Sigmoid colon (tissue), 7 donors: ENCODE measurements at regions of chr11 and their contacts with region 1.

Region 1: DNA sequence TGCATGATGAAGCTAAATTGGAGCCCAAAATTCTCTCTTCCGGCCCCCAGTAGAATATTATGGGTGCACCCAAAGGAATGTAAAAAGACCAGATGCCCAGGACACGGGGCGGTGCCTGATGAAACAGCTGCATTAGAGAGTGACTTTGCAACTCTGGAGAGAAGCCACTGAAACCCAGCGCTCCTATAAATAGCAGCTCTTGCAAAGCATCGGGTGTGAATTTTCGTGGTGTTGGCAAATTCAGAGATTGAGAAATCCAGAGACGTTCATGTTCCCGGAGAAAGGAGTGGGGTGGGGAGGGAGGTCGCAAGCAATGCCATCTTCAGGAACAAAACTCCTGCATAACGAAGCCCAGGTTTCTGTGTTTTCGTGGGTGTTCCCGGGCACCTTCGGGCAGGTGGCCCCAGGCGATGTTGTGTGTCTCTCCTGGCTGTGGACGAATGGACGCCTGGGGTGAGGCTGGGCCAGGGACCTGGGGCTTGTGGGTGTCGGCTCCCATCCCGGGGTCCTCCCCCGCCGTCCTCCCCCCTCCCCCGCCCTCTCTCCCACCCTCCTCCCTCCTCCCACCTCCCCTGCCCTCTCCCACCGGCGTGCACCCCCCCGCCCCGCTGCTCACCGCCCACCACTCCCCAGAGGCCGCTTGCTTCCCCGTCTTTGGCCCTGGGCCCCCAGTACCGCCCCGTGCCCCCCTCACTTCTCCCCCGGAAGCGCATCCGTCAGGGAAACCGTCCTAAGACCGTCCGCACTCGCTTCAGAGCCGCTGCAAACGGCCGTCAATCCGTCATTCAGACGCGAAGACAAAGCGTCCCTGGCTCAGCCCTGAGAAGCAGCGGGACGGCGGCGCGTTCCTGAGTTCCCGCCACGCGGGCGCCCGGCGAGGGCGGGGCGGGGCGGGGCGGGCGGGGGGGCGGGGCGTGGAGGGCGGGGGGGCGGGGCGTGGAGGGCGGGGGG is 26.7 kb upstream of the TOLLIP start:
- DNase-seq: peak; percentile 93
- H3K4me3 ChIP-seq: peak overlapping the region; percentile 38 to 58 (median 53)
- H3K27ac ChIP-seq: peak overlapping the region; percentile 72 to 87 (median 76)
- H3K4me1 ChIP-seq: peaks cover 0 to 23% (median 21%) of the 10 kb centered on the region in 4 donors
- H3K27me3 ChIP-seq: no peaks in the 10 kb centered on the region
- CTCF ChIP-seq: no peak
- EP300 ChIP-seq: no peak
- POLR2A ChIP-seq: no peak

Region 2: DNA sequence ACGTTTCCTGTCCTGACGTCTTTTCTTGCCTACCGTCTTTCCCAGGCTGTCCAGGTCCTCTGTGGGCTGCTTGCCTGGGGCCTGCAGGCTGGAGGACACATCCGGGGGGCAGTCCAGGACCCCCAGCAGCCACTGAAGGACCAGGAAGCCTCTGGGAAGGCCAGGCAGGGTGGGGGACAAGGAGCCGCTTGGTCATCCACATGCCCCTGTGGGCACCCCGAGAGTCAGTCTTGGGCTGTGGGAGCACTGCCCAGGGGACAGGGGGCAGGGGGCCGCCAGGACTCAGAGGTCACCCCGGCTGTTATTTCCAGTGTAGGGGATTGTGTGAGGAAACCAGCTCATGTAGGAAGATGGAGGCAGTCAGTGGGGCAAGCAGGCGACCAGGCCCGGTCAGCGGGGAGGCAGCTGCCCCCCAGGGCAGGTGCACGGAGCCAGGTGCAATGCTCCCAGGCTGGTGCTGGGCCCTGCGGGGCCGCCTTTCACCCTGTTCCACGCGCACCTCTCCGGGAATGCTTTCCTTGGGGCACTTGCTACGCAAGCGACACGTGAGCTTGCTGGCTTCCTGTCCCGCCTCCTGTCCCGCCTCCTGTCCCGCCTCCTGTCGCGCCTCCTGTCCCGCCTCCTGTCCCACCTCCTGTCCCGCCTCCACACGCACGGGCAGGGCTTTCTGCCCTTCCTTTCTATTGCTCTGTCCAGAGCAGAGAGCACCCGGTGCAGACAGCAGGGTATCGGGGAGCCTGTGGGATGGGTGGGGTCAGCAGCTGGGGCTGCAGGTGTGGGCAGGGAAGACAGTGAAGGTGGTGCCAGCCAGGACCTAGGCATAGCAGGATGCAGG is 73.7 kb before region 1 on chr11:
- intact Hi-C with region 1: loop called (anchors 5 kb)
- DNase-seq: peak; percentile 97
- H3K4me3 ChIP-seq: peak overlapping the region; percentile 30 to 50 (median 46)
- H3K27ac ChIP-seq: peak overlapping the region; percentile 65 to 74 (median 72)
- H3K4me1 ChIP-seq: peaks cover 0 to 17% (median 15%) of the 10 kb centered on the region in 4 donors
- H3K27me3 ChIP-seq: no peaks in the 10 kb centered on the region
- CTCF ChIP-seq: no peak
- EP300 ChIP-seq: no peak
- POLR2A ChIP-seq: peak in 1 of 2 donors; percentile 65

Region 3: DNA sequence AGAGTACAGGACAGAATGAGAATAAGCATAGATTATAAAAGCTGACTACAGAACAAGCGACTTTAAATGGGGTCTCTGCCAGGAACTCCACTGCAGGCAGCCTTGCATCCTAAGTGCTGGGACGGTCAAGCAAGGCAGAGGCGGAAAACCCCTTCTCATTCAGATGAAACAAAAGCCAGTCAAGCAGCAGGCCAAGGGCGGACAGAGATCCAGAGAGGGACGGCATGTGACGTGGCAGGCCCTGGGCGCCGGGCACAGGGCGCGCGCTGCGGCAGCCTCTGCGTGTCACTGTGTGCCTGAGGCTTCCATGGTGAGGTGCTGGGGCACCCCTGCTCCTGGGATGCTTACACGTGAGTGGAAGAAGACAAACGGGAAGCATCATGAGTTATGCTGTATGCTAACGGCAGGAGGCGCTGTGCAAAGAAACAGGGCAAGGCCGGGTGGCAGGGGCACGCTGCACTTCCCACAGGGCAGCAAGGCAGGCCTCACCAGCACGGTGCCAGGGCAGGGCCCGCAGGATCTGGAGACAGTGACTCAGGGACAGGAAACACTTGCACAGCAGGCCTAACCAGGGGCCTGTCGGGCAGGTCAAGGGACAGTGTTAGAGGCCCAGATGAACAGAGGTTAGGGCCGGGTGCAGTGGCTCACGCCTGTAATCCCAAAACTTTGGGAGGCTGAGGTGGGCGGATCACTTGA is 32.8 kb before region 1 on chr11:
- intact Hi-C with region 1: loop called (anchors 5 kb)
- DNase-seq: no peak
- H3K4me3 ChIP-seq: no peak overlapping the region
- H3K27ac ChIP-seq: peak overlapping the region; percentile 68 to 76 (median 72)
- H3K4me1 ChIP-seq: peaks cover 0 to 87% (median 75%) of the 10 kb centered on the region in 4 donors
- H3K27me3 ChIP-seq: no peaks in the 10 kb centered on the region
- CTCF ChIP-seq: no peak
- EP300 ChIP-seq: no peak
- POLR2A ChIP-seq: no peak

Region 4: DNA sequence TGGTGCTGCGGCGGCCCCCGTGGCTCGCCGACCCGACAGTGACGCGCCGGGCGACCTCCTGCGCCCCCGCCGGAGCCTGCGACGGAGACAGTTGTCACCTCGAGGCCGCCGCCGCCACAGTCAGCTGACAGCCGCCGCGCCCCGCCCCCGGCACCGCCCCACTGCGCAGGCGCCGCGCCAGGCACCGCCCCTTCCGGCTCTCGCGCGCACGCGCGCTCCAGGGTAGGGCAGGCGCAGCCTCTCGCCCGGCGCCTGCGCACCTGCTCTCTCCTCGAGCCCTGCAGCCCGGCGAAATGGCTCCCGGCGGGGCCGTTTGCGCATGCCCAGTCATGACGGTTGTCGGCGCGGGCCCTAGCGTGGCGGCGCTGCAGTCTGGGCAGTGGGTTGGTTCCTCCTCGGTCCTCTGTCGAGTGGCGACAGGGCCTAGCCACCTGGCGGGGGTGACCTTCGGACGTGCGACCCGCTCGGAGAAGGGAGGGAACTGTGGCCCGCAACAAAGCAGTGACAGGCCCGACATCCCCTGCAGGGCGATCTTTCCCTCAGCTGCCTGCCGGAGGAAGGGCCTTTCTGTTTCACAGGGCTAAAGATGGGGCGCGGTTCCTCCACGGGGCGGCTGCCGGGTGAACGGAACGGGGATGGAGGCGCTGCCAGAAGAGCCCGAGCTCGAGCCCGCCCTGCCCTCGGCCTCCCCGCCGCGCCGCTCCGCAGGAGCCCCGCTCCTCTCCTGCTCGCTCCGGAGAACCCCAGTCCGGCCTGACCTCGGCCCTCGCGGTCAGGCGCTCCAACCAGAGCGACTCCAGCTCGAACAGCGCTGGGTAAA is 26.4 kb before region 1 on chr11 and contains the start of gene TOLLIP:
- intact Hi-C with region 1: loop called (anchors 2 kb)
- DNase-seq: peak; percentile 98
- H3K4me3 ChIP-seq: peak within 1 kb of the TSS; percentile 75 to 91 (median 87)
- H3K27ac ChIP-seq: peak within 1 kb of the TSS; percentile 93 to 95 (median 94)
- H3K4me1 ChIP-seq: peaks cover 0 to 54% (median 48%) of the 10 kb centered on the region in 4 donors
- H3K27me3 ChIP-seq: no peaks in the 10 kb centered on the region
- CTCF ChIP-seq: no peak
- EP300 ChIP-seq: no peak
- POLR2A ChIP-seq: peak; percentile 76 to 84
- total RNA-seq, gene TOLLIP: 25.0 to 39.1 (median 36.0) TPM

Region 5: DNA sequence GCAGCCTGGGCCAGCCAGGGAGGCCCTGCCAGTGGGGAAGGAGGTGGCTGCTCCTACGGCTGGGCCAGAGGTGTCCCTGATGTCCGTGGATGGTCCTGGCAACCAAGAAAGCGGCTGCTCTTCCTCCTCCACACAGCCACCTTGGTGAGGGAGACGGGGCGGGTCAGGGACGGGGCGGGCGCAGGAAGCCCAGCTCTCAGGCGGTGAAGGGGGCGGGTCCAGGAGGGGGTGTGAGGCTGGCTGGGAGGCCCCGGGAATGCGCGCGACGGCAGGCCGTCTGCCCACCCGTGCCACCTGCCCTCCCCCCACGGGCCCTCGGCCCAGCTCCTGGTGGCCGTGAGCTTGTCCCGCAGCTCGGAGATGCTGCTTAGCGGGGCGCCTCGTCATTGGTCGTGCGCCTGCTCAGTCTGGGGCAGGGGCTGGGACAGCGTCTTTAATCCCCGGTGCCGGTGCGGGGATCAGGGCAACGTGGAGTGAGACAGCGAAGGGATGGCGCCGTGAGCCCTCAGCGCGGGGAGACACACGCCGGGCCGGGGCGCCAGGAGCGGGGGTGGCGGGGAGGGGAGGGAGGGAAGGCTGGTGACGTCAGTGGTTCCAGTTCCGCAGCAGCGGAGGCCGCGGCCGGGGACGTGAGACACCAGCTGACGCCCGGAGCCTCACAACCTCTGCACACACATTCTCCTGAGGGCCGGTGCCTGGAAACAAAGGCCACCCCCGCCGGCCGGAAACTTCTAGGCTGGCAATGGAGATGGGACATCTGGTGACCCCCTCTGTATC is 46.9 kb after region 1 on chr11:
- intact Hi-C with region 1: loop called (anchors 5 kb)
- DNase-seq: peak; percentile 94
- H3K4me3 ChIP-seq: peak overlapping the region; percentile 36 to 59 (median 46)
- H3K27ac ChIP-seq: peak overlapping the region; percentile 56 to 86 (median 72)
- H3K4me1 ChIP-seq: peaks cover 0 to 9% (median 8%) of the 10 kb centered on the region in 4 donors
- H3K27me3 ChIP-seq: no peaks in the 10 kb centered on the region
- CTCF ChIP-seq: no peak
- EP300 ChIP-seq: no peak
- POLR2A ChIP-seq: no peak

Region 6: DNA sequence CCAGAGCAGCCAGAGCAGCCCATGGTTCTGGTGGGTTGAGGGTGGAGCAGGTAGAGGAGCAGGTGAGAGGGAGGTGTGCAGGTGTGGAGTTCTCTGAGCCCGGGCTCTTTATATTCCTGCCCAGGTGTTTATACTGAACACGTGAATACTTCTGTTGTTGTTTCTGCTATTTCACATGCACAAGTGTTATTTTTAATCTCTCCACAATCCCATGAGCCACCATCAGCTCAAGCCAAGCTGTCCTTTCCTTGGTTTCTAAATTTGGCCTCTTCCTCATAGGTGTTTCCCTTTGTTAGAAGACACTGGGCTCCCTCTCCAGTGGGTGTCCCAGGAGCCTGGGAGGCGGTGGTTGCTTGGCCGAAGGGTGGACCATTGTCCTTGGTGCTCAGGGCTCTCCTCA is 272.3 kb after region 1 on chr11 and contains the start of gene KRTAP5-3:
- intact Hi-C with region 1: no loop called
- DNase-seq: no peak
- H3K4me3 ChIP-seq: no peak within 1 kb of the TSS
- H3K27ac ChIP-seq: no peak within 1 kb of the TSS
- H3K4me1 ChIP-seq: no peaks in the 10 kb centered on the region
- H3K27me3 ChIP-seq: peaks cover 0 to 51% (median 17%) of the 10 kb centered on the region in 3 donors
- CTCF ChIP-seq: no peak
- EP300 ChIP-seq: no peak
- POLR2A ChIP-seq: no peak
- total RNA-seq, gene KRTAP5-3: not detected